ENCODE measurements at regions of chr5 and their contacts with region 1.

Region 1: GRCh38 chr5:10536931-10537579 is 26.8 kb upstream of the ANKRD33B start:
- DNase-seq: no peak
- H3K4me3 ChIP-seq: peak overlapping the region in 1 of 3 donors; percentile 7
- H3K27ac ChIP-seq: no peak overlapping the region
- H3K4me1 ChIP-seq: no peaks in the 10 kb centered on the region
- H3K27me3 ChIP-seq: peaks cover 0 to 14% of the 10 kb centered on the region in 2 donors
- CTCF ChIP-seq: no peak
- POLR2A ChIP-seq: no peak

Region 2: DNA sequence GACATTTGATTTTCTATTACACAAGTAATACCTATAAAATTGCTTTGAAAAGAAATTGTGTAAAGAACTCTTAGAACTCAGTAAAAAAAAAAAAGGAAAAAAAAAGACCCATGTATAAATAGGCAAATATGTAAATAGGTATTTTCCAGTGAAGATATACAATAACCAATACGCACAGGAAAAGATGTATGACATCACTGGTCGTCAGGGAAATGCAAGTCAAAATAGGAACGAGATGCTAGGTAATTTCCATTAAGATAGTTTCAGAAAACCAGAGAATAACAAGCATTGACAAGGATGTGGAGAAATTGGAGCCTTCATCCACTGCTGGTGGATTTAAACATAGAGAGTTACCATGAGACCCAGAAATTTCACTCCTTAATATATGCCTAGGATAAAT is 1959.3 kb before region 1 on chr5:
- intact Hi-C with region 1: loop called (anchors 5 kb)
- DNase-seq: no peak
- H3K4me3 ChIP-seq: no peak overlapping the region
- H3K27ac ChIP-seq: no peak overlapping the region
- H3K4me1 ChIP-seq: no peaks in the 10 kb centered on the region
- H3K27me3 ChIP-seq: no peaks in the 10 kb centered on the region
- CTCF ChIP-seq: no peak
- POLR2A ChIP-seq: no peak

Measured in breast epithelium (tissue), 4 donors.